PC-3 (cell line): ENCODE measurements at regions of chr13 and their contacts with region 1.

Region 1: GRCh38 chr13:50123862-50124536 is 108.8 kb downstream of the KCNRG start:
- DNase-seq: peak; percentile 84
- ATAC-seq: peak; percentile 68
- H3K4me3 ChIP-seq: peak overlapping the region; percentile 93
- H3K27ac ChIP-seq: peak overlapping the region; percentile 87
- H3K4me1 ChIP-seq: peaks cover 10% of the 10 kb centered on the region; the same call in 1 of the 2 replicates
- H3K27me3 ChIP-seq: no peaks in the 10 kb centered on the region
- CTCF ChIP-seq: no peak

Region 2: GRCh38 chr13:49996951-49997895 is 126.8 kb before region 1 on chr13 and contains the start of gene TRIM13:
- CTCF ChIA-PET with region 1: no interaction called
- POLR2A ChIA-PET with region 1: interaction called, 21 read pairs
- intact Hi-C with region 1: no loop called
- DNase-seq: peak; percentile 79
- ATAC-seq: peak; percentile 80
- H3K4me3 ChIP-seq: peak within 1 kb of the TSS; percentile 95
- H3K27ac ChIP-seq: peak within 1 kb of the TSS; percentile 89
- H3K4me1 ChIP-seq: peaks cover 23% of the 10 kb centered on the region
- H3K27me3 ChIP-seq: no peaks in the 10 kb centered on the region
- CTCF ChIP-seq: peak; percentile 77
- total RNA-seq, gene TRIM13: 6.7 and 13.7 TPM in 2 replicates

Region 3: GRCh38 chr13:50015258-50015657 is 108.7 kb before region 1 on chr13 and contains the start of gene KCNRG:
- CTCF ChIA-PET with region 1: interaction called, 12 read pairs
- POLR2A ChIA-PET with region 1: no interaction called
- intact Hi-C with region 1: no loop called
- DNase-seq: no peak
- ATAC-seq: no peak
- H3K4me3 ChIP-seq: no peak within 1 kb of the TSS
- H3K27ac ChIP-seq: no peak within 1 kb of the TSS
- H3K4me1 ChIP-seq: no peaks in the 10 kb centered on the region
- H3K27me3 ChIP-seq: no peaks in the 10 kb centered on the region
- CTCF ChIP-seq: no peak
- total RNA-seq, gene KCNRG: 0.15 and 2.4 TPM in 2 replicates

Region 4: DNA sequence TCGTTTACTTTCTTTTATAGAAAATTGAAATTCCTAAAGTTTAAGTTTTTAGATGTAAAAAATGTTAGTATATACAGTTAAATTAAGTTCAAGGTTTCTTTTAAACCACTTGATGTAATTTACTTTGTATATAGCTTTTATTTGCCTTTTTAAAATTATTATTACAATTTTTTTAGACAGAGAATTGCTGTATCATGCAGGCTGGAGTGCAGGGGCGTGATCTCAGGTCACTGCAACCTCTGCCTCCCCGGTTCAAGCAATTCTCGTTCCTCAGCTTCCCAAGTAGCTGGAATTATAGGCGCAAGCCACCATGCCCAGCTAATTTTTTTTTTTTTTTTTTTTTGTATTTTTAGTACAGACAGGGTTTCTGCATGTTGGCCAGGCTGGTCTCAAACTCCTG is 33.8 kb before region 1 on chr13:
- CTCF ChIA-PET with region 1: no interaction called
- POLR2A ChIA-PET with region 1: interaction called, 12 read pairs
- intact Hi-C with region 1: no loop called
- DNase-seq: no peak
- ATAC-seq: no peak
- H3K4me3 ChIP-seq: no peak overlapping the region
- H3K27ac ChIP-seq: no peak overlapping the region
- H3K4me1 ChIP-seq: peaks cover 1% of the 10 kb centered on the region; the same call in 1 of the 2 replicates
- H3K27me3 ChIP-seq: no peaks in the 10 kb centered on the region
- CTCF ChIP-seq: no peak

Region 5: GRCh38 chr13:50676602-50677001 is 552.6 kb after region 1 on chr13:
- CTCF ChIA-PET with region 1: no interaction called
- POLR2A ChIA-PET with region 1: no interaction called
- intact Hi-C with region 1: no loop called
- DNase-seq: peak; percentile 66
- ATAC-seq: peak; percentile 71
- H3K4me3 ChIP-seq: no peak overlapping the region
- H3K27ac ChIP-seq: peak overlapping the region; percentile 47
- H3K4me1 ChIP-seq: peaks cover 39% of the 10 kb centered on the region
- H3K27me3 ChIP-seq: no peaks in the 10 kb centered on the region
- CTCF ChIP-seq: no peak